ENCODE measurements at regions of chr1 and their contacts with region 1.

Region 1: GRCh38 chr1:244864253-244865027 is at the start of gene HNRNPU:
- DNase-seq: peak; percentile 89
- H3K4me3 ChIP-seq: peak within 1 kb of the TSS; percentile 73 to 98 (median 92)
- H3K27ac ChIP-seq: peak within 1 kb of the TSS; percentile 98 to 100 (median 100)
- H3K4me1 ChIP-seq: peaks cover 14 to 38% (median 23%) of the 10 kb centered on the region in 3 donors
- H3K27me3 ChIP-seq: no peaks in the 10 kb centered on the region
- CTCF ChIP-seq: peak in 5 of 6 experiments; percentile 22 to 60 (median 52)
- POLR2A ChIP-seq: peak in 3 of 4 donors; percentile 84 to 100 (median 97)
- total RNA-seq, gene HNRNPU: 176 to 308 (median 257) TPM

Region 2: GRCh38 chr1:244713332-244713731 is 151.1 kb before region 1 on chr1:
- intact Hi-C with region 1: no loop called
- DNase-seq: no peak
- H3K4me3 ChIP-seq: no peak overlapping the region
- H3K27ac ChIP-seq: no peak overlapping the region
- H3K4me1 ChIP-seq: no peaks in the 10 kb centered on the region
- H3K27me3 ChIP-seq: no peaks in the 10 kb centered on the region
- CTCF ChIP-seq: no peak
- POLR2A ChIP-seq: no peak

Region 3: GRCh38 chr1:244970661-244971551 is 106.5 kb after region 1 on chr1:
- intact Hi-C with region 1: loop called (anchors 5 kb)
- DNase-seq: peak; percentile 85
- H3K4me3 ChIP-seq: peak overlapping the region; percentile 70 to 94 (median 80)
- H3K27ac ChIP-seq: peak overlapping the region; percentile 99 to 100 (median 100)
- H3K4me1 ChIP-seq: peaks cover 0 to 27% (median 9%) of the 10 kb centered on the region in 3 donors
- H3K27me3 ChIP-seq: no peaks in the 10 kb centered on the region
- CTCF ChIP-seq: peak; percentile 47 to 70 (median 58)
- POLR2A ChIP-seq: peak in 3 of 4 donors; percentile 18 to 61 (median 60)